ENCODE measurements at regions of chr12 and their contacts with region 1.

Region 1: GRCh38 chr12:116277393-116278278 is at the start of gene MED13L:
- DNase-seq: peak; percentile 96
- H3K4me3 Mint-ChIP-seq: peak within 1 kb of the TSS; percentile 95
- H3K27ac Mint-ChIP-seq: peak within 1 kb of the TSS; percentile 90
- H3K4me1 Mint-ChIP-seq: peaks cover 43% of the 10 kb centered on the region
- H3K27me3 Mint-ChIP-seq: peaks cover 1% of the 10 kb centered on the region
- total RNA-seq, gene MED13L: 55.1 and 62.9 TPM in 2 replicates

Region 2: GRCh38 chr12:116060764-116061163 is 216.9 kb before region 1 on chr12:
- intact Hi-C with region 1: loop called (anchors 2 kb)
- DNase-seq: peak; percentile 69
- H3K4me3 Mint-ChIP-seq: peak overlapping the region; percentile 81
- H3K27ac Mint-ChIP-seq: peak overlapping the region; percentile 91
- H3K4me1 Mint-ChIP-seq: peaks cover 22% of the 10 kb centered on the region
- H3K27me3 Mint-ChIP-seq: no peaks in the 10 kb centered on the region

Region 3: DNA sequence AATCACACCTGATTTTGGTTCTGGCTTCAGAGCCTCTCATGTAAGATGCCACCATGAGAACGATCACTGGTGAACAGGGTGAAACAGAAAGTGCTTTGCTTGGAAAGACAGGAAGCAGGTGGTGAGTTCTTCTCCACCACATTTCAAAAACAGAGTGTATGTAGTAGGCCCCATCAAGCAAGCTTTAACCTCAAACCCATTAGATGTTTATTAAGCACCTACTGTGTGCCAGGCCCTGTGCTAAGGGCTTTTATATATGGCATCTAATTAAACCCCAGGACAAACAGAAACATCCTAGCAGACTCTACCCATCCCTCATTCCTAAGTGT is 47.7 kb after region 1 on chr12:
- intact Hi-C with region 1: loop called (anchors 2 kb)
- DNase-seq: peak; percentile 84
- H3K4me3 Mint-ChIP-seq: peak overlapping the region; percentile 51
- H3K27ac Mint-ChIP-seq: peak overlapping the region; percentile 81
- H3K4me1 Mint-ChIP-seq: peaks cover 29% of the 10 kb centered on the region
- H3K27me3 Mint-ChIP-seq: no peaks in the 10 kb centered on the region

Region 4: DNA sequence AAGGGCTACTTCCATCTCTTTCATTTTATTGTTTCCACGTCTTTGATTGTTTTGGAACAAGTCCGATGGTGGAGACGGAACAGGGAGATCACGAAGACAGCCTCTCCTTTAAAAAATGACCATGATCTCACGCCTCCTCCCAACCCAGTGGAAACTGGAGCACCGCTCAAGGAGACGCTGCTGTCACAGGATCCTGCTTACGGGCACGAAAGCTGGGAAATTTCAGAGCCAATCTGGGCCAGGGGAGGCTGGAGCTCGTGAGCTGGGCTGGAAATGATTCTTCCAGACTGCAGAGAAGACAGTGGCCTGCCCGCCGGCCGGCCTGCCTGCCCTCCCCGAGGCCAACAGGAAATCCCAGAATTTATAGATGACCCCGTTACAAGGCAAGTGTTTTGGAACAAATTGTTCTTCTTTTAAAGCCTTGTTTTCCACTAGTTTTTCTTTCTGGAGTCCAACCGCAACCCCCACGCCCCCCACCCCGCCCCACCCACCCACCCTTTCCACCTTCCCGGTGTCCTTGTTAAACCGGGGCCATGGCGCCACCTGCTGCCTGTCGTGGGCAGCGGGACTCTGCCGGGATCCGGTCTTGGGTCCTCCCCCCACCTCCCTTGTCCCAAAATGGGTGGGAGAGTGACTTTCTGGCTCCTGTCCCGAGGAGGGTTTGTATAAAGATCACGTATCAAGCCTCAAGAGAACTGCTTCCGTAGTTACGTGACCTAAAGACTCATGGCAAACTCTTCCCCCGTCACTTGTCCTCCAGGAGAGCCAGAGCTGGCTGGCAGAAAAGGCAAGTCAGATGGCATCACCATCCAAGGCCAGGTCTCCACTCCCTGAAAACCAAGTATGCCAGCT is 321.9 kb after region 1 on chr12:
- intact Hi-C with region 1: loop called (anchors 10 kb)
- DNase-seq: peak; percentile 86
- H3K4me3 Mint-ChIP-seq: no peak overlapping the region
- H3K27ac Mint-ChIP-seq: no peak overlapping the region
- H3K4me1 Mint-ChIP-seq: peaks cover 26% of the 10 kb centered on the region
- H3K27me3 Mint-ChIP-seq: no peaks in the 10 kb centered on the region

Region 5: GRCh38 chr12:116737774-116738700 is 460.4 kb after region 1 on chr12 and contains the starts of genes RNFT2 and SPRING1:
- intact Hi-C with region 1: loop called (anchors 2 kb)
- DNase-seq: peak; percentile 100
- H3K4me3 Mint-ChIP-seq: peak within 1 kb of the TSS; percentile 87
- H3K27ac Mint-ChIP-seq: peak within 1 kb of the TSS; percentile 89
- H3K4me1 Mint-ChIP-seq: peaks cover 13% of the 10 kb centered on the region
- H3K27me3 Mint-ChIP-seq: no peaks in the 10 kb centered on the region
- total RNA-seq, gene RNFT2: 10.1 and 11.6 TPM in 2 replicates
- total RNA-seq, gene SPRING1: 28.6 and 29.2 TPM in 2 replicates